ENCODE measurements at regions of chr11 and their contacts with region 1.

Region 1: GRCh38 chr11:64094463-64095260 is 58.9 kb downstream of the FLRT1 start:
- DNase-seq: peak; percentile 19
- H3K4me3 ChIP-seq: no peak overlapping the region
- H3K27ac ChIP-seq: no peak overlapping the region
- H3K4me1 ChIP-seq: peaks cover 10% of the 10 kb centered on the region
- H3K27me3 ChIP-seq: no peaks in the 10 kb centered on the region
- CTCF ChIP-seq: no peak

Region 2: DNA sequence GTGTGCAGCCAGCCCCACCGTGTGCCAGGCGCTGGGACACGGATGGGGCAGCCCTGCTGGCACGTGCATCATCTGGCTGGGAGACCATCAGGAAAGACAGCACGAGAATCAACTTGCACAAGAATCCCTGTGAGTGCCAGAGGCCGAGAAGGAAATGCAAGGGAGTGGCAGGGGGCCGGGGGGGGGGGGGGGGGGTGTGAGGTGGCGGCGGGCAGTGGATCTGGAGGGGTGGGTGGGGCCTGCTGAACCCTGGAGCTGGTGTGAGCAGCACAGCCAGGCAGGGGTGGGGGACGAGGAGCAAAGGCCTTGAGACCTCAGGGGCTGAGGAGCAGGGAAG is 72.9 kb before region 1 on chr11:
- CTCF ChIA-PET with region 1: no interaction called
- dilution Hi-C with region 1: loop called (anchors 5 kb)
- in situ Hi-C with region 1: no loop called
- intact Hi-C with region 1: no loop called
- DNase-seq: no peak
- H3K4me3 ChIP-seq: no peak overlapping the region
- H3K27ac ChIP-seq: no peak overlapping the region
- H3K4me1 ChIP-seq: peaks cover 3% of the 10 kb centered on the region
- H3K27me3 ChIP-seq: peaks cover 3% of the 10 kb centered on the region
- CTCF ChIP-seq: no peak

Region 3: GRCh38 chr11:64032050-64032449 is 62.6 kb before region 1 on chr11:
- CTCF ChIA-PET with region 1: no interaction called
- dilution Hi-C with region 1: no loop called
- in situ Hi-C with region 1: no loop called
- intact Hi-C with region 1: no loop called
- DNase-seq: no peak
- H3K4me3 ChIP-seq: no peak overlapping the region
- H3K27ac ChIP-seq: no peak overlapping the region
- H3K4me1 ChIP-seq: peaks cover 4% of the 10 kb centered on the region
- H3K27me3 ChIP-seq: peaks cover 34% of the 10 kb centered on the region
- CTCF ChIP-seq: no peak

Region 4: DNA sequence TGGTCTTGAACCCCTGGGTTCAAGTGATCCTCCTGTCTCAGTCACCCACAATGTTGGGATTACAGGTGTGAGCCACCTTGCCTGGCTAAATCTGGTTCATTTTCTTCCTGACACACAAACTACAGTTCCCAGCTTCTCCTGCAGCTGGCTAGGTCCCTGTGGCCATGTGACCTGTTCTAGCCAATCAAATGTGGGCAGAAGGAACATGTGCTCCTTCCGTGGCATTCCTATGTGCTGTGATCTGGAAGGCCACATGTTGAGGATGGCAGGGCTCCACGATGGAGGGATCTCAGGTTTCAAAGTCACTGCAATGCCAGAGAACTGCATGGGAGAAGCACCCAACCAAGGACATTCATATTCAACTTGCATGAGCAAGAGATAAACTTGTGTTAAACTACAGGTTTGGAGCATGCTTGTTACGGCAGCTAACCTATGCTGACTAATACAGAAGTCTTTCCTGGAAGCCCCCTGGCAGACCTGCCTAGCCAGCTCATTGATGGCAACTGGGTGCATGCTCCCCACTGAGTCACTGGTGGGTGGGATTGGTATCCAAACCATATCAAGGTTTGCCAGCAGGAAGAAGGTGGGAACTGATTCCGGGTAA is 350.3 kb after region 1 on chr11:
- CTCF ChIA-PET with region 1: no interaction called
- dilution Hi-C with region 1: no loop called
- in situ Hi-C with region 1: no loop called
- intact Hi-C with region 1: no loop called
- DNase-seq: peak; percentile 21
- H3K4me3 ChIP-seq: no peak overlapping the region
- H3K27ac ChIP-seq: no peak overlapping the region
- H3K4me1 ChIP-seq: peaks cover 13% of the 10 kb centered on the region
- H3K27me3 ChIP-seq: no peaks in the 10 kb centered on the region
- CTCF ChIP-seq: no peak